A549 (cell line): ENCODE measurements at regions of chr11 and their contacts with region 1.

Region 1: DNA sequence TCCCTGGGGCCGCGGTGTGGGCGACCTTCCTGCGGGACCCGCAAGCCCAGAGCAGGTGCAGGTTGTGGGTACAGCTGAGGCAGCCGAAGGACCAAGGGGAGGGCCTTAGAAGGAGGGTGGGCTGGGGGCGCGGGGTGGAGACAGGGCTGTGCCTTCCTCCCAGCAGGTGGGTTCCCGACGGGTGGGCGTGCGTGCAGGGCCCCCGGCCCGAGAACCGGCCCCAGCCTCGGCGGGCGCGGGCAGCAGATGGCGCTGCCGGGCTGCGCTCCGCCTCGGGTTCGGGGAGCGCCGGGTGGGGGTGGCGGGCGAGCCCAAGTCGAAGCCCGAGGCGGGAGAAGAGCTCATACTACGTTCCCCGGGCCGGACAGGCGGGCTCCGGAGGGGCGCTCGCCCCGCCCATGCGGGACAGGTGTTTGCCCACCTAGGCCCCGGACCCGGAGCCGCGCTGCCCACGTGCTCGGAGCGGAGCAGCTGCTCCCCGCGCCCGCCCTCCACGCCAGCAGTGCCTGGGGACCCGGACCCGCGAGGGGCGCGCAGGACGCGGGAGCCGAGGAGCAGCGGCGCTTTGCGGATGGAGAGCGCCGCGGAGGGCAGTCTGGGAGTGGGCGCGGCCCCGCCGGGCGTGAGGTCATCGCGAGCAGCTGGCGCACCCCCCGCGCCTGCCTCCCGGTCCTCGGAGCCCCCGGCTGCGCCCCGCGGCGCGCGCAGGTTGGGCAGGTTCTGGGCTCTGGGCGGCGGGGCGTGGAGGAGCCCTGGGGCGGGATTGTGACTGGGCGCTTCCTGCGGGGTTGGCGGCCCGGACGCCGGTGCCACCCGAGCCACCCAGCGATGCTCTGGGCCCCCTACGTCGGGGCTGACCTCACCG is 25.3 kb downstream of the DUSP8 start:
- DNase-seq: peak; percentile 58 to 84
- ATAC-seq: peak; percentile 60 to 83
- H3K4me3 ChIP-seq: peak overlapping the region; percentile 63
- H3K27ac ChIP-seq: peak overlapping the region; percentile 74 to 86
- H3K4me1 ChIP-seq: peaks cover 21% of the 10 kb centered on the region
- CTCF ChIP-seq: peak; percentile 93
- EP300 ChIP-seq: no peak
- POLR2A ChIP-seq: no peak
- RAD21 ChIP-seq: peak; percentile 77 to 98

Region 2: GRCh38 chr11:1534682-1535081 is 12.1 kb before region 1 on chr11:
- CTCF ChIA-PET with region 1: interaction called, 34 read pairs
- POLR2A ChIA-PET with region 1: no interaction called
- DNase-seq: no peak
- ATAC-seq: no peak
- H3K4me3 ChIP-seq: no peak overlapping the region
- H3K27ac ChIP-seq: no peak overlapping the region
- H3K4me1 ChIP-seq: no peaks in the 10 kb centered on the region
- CTCF ChIP-seq: no peak
- EP300 ChIP-seq: no peak
- POLR2A ChIP-seq: no peak
- RAD21 ChIP-seq: no peak

Region 3: GRCh38 chr11:1592628-1593027 is 45.9 kb after region 1 on chr11:
- CTCF ChIA-PET with region 1: interaction called, 17 read pairs
- POLR2A ChIA-PET with region 1: no interaction called
- DNase-seq: no peak
- ATAC-seq: no peak
- H3K4me3 ChIP-seq: no peak overlapping the region
- H3K27ac ChIP-seq: no peak overlapping the region
- H3K4me1 ChIP-seq: peaks cover 15% of the 10 kb centered on the region
- CTCF ChIP-seq: no peak
- EP300 ChIP-seq: no peak
- POLR2A ChIP-seq: no peak
- RAD21 ChIP-seq: no peak